Activated naive CD4-positive, alpha-beta T cell treated with anti-CD3 and anti-CD28 coated beads for 36 hours (primary cell): ENCODE measurements at regions of chr20 and their contacts with region 1.

Region 1: DNA sequence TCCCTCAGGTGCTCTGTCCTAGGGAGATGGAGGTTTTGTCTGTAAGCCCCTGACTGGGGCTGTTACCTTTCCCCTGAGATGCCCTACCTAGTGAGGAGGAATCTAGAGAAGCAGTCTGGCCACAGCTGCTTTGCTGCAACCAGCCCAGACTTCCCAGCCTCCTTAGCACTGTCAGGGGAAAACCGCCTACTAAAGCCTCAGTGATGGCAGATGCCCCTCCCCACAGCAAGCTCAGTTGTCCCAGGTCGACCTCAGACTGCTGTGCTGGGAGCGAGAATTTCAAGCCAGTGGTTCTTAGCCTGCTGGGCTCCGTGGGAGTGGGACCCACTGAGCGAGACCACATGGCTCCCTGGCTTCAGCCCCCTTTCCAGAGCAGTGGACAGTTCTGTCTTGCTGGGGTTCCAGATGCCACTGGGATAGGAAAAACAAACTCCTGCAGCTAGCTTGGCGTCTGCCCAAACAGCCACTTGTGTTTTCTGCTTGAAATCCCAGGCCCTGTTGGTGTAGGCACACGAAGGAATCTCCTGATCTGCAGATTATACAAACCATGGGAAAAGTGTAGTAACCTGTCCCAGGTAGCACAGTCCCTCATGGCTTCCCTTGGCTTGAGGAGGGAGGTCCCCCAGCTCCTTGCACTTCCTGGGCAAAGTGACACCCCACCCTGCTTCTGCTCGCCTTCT is 146.4 kb upstream of the PROKR2 start:
- DNase-seq: no peak
- H3K4me3 Mint-ChIP-seq: no peak overlapping the region
- H3K27ac Mint-ChIP-seq: no peak overlapping the region
- H3K4me1 Mint-ChIP-seq: no peaks in the 10 kb centered on the region
- H3K27me3 Mint-ChIP-seq: peaks cover 25% of the 10 kb centered on the region

Region 2: DNA sequence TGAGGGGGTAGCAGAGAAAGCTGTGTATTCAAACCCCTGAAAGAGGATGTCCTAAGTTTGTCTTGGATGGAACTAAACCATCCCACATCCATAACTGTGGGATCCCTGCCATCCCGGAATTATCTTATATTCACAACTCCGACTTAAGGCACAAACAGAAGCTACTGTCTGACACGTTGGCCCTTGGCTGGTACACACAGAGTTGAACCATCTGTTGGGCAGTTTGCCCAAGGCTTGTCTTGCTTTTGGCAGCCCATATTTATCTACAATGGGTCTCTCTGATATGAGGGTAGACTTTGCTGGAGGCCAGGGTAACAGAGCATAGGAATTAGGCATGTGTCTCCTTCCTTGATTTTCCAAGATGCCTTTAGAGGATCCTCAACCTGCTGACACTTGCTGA is 29.8 kb before region 1 on chr20:
- CTCF ChIA-PET with region 1: no interaction called
- intact Hi-C with region 1: loop called (anchors 2 kb)
- DNase-seq: no peak
- H3K4me3 Mint-ChIP-seq: no peak overlapping the region
- H3K27ac Mint-ChIP-seq: no peak overlapping the region
- H3K4me1 Mint-ChIP-seq: no peaks in the 10 kb centered on the region
- H3K27me3 Mint-ChIP-seq: peaks cover 11% of the 10 kb centered on the region

Region 3: GRCh38 chr20:5806457-5807263 is 343.5 kb after region 1 on chr20:
- CTCF ChIA-PET with region 1: no interaction called
- intact Hi-C with region 1: no loop called
- DNase-seq: peak; percentile 18
- H3K4me3 Mint-ChIP-seq: no peak overlapping the region
- H3K27ac Mint-ChIP-seq: no peak overlapping the region
- H3K4me1 Mint-ChIP-seq: peaks cover 20% of the 10 kb centered on the region
- H3K27me3 Mint-ChIP-seq: no peaks in the 10 kb centered on the region

Region 4: DNA sequence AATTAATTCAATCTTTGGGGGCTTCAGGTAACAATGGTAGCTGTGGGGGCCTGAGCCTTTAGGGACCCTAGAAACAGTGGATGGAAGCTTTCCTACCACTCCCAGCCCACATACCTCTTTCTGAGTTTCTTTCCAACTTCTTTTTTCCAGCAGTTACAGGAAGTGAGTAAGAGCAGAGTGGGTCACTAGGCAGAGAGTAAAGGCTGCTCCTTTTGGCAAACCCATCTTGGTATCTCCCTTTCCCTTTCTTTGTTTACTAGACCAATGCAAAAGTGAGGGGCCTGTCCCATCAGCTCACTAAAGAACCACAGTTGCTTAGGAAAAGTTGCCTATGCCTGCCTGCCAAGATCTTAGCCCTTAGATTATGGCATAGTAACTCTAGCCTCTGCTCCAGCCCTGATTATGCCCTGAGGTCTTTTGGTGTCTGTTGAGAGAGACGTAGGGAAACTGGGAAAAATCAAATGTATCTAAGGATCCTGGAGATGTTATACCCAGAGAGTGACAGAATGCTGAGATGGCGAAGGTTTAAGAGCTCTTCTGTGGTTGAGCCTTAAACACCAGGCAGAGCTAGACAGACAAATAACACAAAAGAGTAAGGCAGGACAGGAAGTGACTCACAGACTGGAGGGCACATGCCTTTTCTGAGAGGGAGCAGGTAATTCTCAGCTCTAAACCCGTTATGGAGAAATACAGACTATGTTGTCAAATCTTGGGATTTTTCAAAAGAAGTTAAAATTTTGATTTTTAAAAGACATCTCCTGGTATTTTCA is 455.9 kb after region 1 on chr20:
- CTCF ChIA-PET with region 1: no interaction called
- intact Hi-C with region 1: no loop called
- DNase-seq: peak; percentile 16
- H3K4me3 Mint-ChIP-seq: no peak overlapping the region
- H3K27ac Mint-ChIP-seq: no peak overlapping the region
- H3K4me1 Mint-ChIP-seq: peaks cover 14% of the 10 kb centered on the region
- H3K27me3 Mint-ChIP-seq: peaks cover 4% of the 10 kb centered on the region